Activated T-helper 2 cell treated with anti-CD3 and anti-CD28 coated beads, Interferon-gamma antibody, Interleukin-2, Interleukin-4, amounts not matched to agents 10 μg/mL and 5 μg/mL and 100 μg/mL, durations not matched to agents 14 hours and 24 hours and 36 hours (primary cell): ENCODE measurements at regions of chr21 and their contacts with region 1.

Region 1: GRCh38 chr21:32735524-32735923 is 7.7 kb upstream of the SYNJ1 start:
- DNase-seq: no peak
- H3K4me3 Mint-ChIP-seq: no peak overlapping the region
- H3K27ac Mint-ChIP-seq: peak overlapping the region; percentile 51
- H3K4me1 Mint-ChIP-seq: peaks cover 26% of the 10 kb centered on the region
- H3K27me3 Mint-ChIP-seq: no peaks in the 10 kb centered on the region

Region 2: GRCh38 chr21:32626621-32627196 is 108.8 kb before region 1 on chr21:
- intact Hi-C with region 1: no loop called
- DNase-seq: no peak
- H3K4me3 Mint-ChIP-seq: no peak overlapping the region
- H3K27ac Mint-ChIP-seq: no peak overlapping the region
- H3K4me1 Mint-ChIP-seq: peaks cover 5% of the 10 kb centered on the region
- H3K27me3 Mint-ChIP-seq: peaks cover 4% of the 10 kb centered on the region

Region 3: DNA sequence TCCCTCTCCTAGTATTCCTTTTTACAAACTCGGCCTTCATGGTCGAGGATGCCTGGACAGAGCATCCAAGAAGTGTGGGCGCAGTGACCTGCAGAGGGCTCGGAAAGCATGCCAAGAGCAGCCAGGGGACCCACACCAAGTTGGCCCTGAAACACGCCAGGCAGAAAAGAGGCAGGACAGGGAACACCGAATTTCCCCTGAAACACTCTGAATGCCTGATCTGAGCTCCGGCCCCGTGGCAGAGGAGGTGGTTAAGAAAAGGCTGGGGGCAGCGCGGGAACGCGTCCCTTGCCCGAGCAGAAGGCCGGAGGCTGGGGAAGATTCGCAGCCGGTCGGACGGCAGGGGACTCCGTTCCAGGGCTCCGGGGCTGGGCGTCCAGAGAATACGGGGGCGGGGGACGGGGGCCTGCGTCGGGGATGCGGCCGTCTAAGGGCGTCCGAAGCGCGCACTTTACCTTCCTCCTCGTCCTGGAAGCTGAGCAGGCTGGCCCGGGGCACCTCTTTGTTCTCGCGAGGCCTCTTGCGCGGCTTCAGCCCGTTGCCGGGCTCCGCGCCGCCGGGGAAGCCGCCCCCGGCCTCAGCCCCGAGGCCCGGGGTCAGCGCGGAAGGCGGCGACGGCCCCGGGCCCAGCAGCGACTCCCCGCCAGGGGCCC is 35.5 kb after region 1 on chr21:
- intact Hi-C with region 1: no loop called
- DNase-seq: no peak
- H3K4me3 Mint-ChIP-seq: peak overlapping the region; percentile 99
- H3K27ac Mint-ChIP-seq: peak overlapping the region; percentile 91
- H3K4me1 Mint-ChIP-seq: peaks cover 49% of the 10 kb centered on the region
- H3K27me3 Mint-ChIP-seq: no peaks in the 10 kb centered on the region

Region 4: GRCh38 chr21:32807717-32808380 is 72.3 kb after region 1 on chr21:
- intact Hi-C with region 1: loop called (anchors 5 kb)
- DNase-seq: no peak
- H3K4me3 Mint-ChIP-seq: no peak overlapping the region
- H3K27ac Mint-ChIP-seq: no peak overlapping the region
- H3K4me1 Mint-ChIP-seq: peaks cover 28% of the 10 kb centered on the region
- H3K27me3 Mint-ChIP-seq: no peaks in the 10 kb centered on the region